Heart right ventricle (tissue), 16 donors: ENCODE measurements at regions of chr21 and their contacts with region 1.

Region 1: DNA sequence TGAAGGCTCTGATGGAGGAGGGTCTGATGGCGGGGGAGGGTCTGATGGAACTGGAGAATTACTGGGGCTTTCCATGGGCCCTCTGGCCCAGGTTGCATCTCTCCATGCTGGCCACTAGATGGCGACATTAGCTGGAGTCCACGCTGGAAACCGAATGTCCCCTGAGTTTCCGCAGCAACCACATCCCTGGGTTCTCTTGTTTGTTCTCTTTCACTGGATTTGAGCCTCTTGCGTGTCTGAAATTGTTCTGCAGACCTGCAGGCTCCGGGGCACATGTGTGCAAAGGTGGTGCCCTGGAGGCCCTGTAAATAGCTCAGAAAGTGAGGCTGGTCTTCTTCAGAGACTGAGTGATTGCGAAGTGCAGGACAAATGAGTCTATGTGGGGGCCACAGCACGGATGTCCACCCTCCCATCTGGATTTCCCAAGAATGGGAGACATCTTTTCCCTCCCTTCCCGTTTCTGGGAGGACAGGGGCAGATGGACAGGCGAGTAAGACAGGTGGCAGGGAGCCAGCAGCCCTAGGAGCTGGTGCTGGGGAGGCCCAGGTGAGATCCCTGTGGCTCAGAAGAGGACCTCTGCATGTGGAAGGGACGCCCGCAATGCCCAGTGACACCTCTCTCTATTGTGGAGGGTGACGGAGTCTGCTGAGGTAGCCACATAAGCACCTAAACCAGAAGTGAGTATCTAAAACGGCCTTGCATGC is 73.2 kb upstream of the ABCG1 start:
- DNase-seq: peak in 1 of 2 donors; percentile 57
- ATAC-seq: peak; percentile 61 to 81 (median 74)
- H3K4me3 ChIP-seq: no peak overlapping the region
- H3K27ac ChIP-seq: no peak overlapping the region
- H3K4me1 ChIP-seq: peaks cover 0 to under 1% (median 0%) of the 10 kb centered on the region in 9 donors
- H3K27me3 ChIP-seq: peaks cover 0 to 8% (median 0%) of the 10 kb centered on the region in 7 donors
- CTCF ChIP-seq: peak; percentile 86 to 96 (median 93)

Region 2: GRCh38 chr21:42079939-42080787 is 65.6 kb before region 1 on chr21:
- intact Hi-C with region 1: no loop called
- DNase-seq: no peak
- ATAC-seq: peak in 2 of 8 donors; percentile 15 to 16
- H3K4me3 ChIP-seq: no peak overlapping the region
- H3K27ac ChIP-seq: no peak overlapping the region
- H3K4me1 ChIP-seq: peaks cover 0 to 20% (median 0%) of the 10 kb centered on the region in 9 donors
- H3K27me3 ChIP-seq: peaks cover 0 to 28% (median 0%) of the 10 kb centered on the region in 7 donors
- CTCF ChIP-seq: no peak

Region 3: GRCh38 chr21:42179316-42179715 is 33.6 kb after region 1 on chr21:
- intact Hi-C with region 1: no loop called
- DNase-seq: no peak
- ATAC-seq: no peak
- H3K4me3 ChIP-seq: no peak overlapping the region
- H3K27ac ChIP-seq: no peak overlapping the region
- H3K4me1 ChIP-seq: peaks cover 0 to 10% (median 0%) of the 10 kb centered on the region in 9 donors
- H3K27me3 ChIP-seq: no peaks in the 10 kb centered on the region
- CTCF ChIP-seq: no peak

Region 4: DNA sequence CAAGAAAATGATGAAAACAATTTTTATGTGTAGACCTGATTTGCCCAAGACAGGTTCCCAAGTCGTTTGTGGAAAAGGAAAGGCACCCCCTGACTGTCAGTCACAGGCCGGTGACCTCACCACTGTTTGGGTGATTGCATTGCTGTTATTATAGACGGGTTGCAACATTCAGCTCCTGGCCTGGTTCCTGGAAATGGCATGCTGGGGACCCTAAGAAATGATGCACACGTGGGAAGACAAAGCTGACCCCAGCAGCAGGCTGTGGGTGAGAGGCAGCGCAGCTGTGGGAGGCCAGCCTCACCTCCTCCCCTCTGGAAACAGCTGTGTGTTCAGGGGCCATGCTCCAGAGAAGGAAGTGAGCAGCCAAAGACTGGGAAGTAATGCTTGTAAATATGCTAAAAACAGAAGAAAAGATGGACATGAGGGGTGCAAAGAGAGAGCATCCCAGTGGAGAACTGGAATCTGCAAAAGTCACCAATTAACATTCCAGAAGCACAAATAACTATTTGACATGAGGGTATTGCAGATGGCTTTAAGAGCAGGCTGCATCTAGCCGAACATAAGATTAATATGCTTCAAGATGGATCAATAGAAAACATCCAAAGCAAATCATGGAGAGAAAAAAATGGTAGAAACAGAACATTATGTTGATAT is 49.8 kb after region 1 on chr21:
- intact Hi-C with region 1: no loop called
- DNase-seq: no peak
- ATAC-seq: peak in 4 of 8 donors; percentile 31 to 44 (median 34)
- H3K4me3 ChIP-seq: no peak overlapping the region
- H3K27ac ChIP-seq: peak overlapping the region in 1 of 10 donors; percentile 5
- H3K4me1 ChIP-seq: peaks cover 3 to 46% (median 15%) of the 10 kb centered on the region in 9 donors
- H3K27me3 ChIP-seq: no peaks in the 10 kb centered on the region
- CTCF ChIP-seq: no peak

Region 5: DNA sequence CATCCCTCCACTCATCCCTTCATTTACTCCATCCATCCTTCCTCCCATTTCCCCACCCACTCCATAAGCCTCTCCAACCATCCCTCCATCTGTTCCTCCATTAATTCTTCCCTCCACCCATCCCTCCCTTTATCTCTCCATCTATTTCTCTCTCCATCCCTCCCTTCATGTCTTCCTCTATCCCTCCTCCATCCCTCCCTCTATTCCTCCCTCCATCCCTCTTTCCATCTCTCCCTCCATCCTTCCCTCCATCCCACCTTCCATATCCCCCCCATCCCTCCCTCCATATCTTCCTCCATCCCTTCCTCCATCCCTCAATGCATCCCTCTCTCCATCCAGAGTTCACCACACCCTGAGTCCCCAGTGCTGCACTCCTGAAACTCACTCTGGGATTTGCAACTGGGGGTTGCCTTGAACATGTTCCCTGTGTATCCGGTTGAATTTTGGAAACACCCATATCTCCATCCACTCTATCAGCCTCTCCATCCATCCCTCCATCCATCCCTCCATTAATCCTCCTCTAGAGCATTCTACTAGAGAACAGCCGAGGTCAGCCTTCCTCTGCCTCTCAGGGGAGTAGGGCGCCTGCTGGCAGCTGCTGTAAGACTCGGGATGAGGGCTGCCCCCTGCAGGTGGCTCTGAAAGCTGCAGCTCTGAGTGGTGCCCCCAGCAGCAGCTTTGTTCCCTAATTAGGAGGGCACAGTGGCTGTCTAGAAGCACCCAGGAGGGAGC is 112.6 kb after region 1 on chr21:
- intact Hi-C with region 1: loop called in 5 of 10 experiments (anchors 2 to 5 kb)
- DNase-seq: peak; percentile 65 to 80
- ATAC-seq: peak in 7 of 8 donors; percentile 42 to 71 (median 59)
- H3K4me3 ChIP-seq: no peak overlapping the region
- H3K27ac ChIP-seq: peak overlapping the region in 1 of 10 donors; percentile 29
- H3K4me1 ChIP-seq: peaks cover 13 to 73% (median 46%) of the 10 kb centered on the region in 9 donors
- H3K27me3 ChIP-seq: no peaks in the 10 kb centered on the region
- CTCF ChIP-seq: peak; percentile 61 to 92 (median 78)

Region 6: DNA sequence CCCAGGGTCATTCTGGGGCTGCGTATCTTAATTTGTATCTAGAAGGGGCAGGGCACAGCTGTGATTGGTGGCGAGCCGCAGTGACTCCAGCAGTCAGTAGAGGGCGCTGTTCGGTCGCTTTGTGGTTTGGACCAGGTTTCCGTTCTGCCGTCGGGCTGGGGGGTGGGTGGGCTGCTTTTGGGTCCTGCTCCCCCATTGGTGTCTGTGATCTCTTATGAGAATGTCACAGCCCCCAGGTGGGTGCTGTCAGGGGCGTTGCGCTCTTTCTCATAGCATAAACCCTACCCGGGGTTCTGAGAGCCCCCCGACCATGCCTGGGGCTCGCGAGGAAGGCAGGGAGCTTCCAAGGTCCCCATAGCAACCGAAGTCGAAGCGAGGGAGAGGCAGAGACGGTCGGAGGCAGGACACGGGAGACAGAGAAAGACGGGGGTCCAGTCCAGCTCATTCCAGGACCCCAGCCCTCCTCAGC is 164.1 kb after region 1 on chr21:
- intact Hi-C with region 1: loop called in 1 of 10 experiments (anchors 10 kb)
- DNase-seq: peak; percentile 37 to 50
- ATAC-seq: peak in 7 of 8 donors; percentile 36 to 66 (median 48)
- H3K4me3 ChIP-seq: no peak overlapping the region
- H3K27ac ChIP-seq: no peak overlapping the region
- H3K4me1 ChIP-seq: peaks cover 0 to 31% (median 24%) of the 10 kb centered on the region in 9 donors
- H3K27me3 ChIP-seq: peaks cover 0 to 53% (median 15%) of the 10 kb centered on the region in 7 donors
- CTCF ChIP-seq: peak; percentile 54 to 78 (median 75)

Region 7: DNA sequence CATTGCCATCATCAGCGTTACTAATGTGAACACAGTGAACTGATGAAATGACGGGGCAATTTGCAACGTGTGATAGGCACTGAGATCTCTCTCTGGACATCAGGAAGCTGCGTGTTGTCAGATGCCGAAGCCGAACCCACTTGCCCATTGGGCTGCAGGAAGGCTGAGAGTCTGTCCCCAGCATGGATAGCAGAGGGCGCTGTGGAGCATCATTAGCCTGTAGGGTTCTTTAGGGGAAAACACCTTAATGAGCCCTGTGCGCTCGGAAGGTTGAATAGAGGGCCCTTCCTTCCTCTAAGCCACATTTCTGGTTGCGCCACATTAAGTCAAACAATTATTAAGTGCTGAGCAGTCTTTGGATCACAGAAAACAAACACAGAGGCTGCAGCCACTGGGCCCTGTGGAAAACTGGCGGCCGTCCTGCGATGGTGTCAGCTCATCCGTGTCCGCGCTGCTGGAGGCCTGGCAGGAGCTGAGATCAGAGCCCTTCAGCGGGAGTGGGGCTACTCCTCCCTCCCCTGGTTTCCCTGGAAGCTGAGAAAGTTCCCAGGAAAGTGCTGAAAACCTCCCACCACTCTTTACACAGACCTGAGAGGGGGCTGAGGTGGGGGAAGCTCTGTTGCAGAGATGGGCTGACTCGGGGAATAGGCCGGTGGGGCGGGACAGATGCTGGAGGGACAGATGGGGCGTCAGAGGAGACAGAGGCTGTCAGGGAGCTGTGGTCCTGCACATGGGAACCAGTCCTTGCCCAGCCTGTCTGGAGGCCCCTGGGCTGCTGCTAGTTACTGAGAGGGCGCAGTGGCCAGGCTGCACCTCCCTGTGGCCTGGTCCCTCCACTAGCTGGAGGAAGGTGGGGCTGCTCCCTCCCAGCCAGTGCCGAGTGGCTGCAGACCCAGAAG is 192.4 kb after region 1 on chr21:
- intact Hi-C with region 1: loop called in 1 of 10 experiments (anchors 10 kb)
- DNase-seq: peak; percentile 50 to 53
- ATAC-seq: peak; percentile 33 to 86 (median 76)
- H3K4me3 ChIP-seq: no peak overlapping the region
- H3K27ac ChIP-seq: no peak overlapping the region
- H3K4me1 ChIP-seq: peaks cover 0 to 7% (median 0%) of the 10 kb centered on the region in 9 donors
- H3K27me3 ChIP-seq: peaks cover 0 to 42% (median 23%) of the 10 kb centered on the region in 7 donors
- CTCF ChIP-seq: peak; percentile 18 to 73 (median 60)

Region 8: GRCh38 chr21:42449296-42449927 is 303.7 kb after region 1 on chr21:
- intact Hi-C with region 1: loop called (anchors 1 to 5 kb)
- DNase-seq: no peak
- ATAC-seq: no peak
- H3K4me3 ChIP-seq: no peak overlapping the region
- H3K27ac ChIP-seq: peak overlapping the region in 1 of 10 donors; percentile 37
- H3K4me1 ChIP-seq: peaks cover 0 to 7% (median 4%) of the 10 kb centered on the region in 9 donors
- H3K27me3 ChIP-seq: peaks cover 0 to 20% (median 7%) of the 10 kb centered on the region in 7 donors
- CTCF ChIP-seq: no peak

Region 9: DNA sequence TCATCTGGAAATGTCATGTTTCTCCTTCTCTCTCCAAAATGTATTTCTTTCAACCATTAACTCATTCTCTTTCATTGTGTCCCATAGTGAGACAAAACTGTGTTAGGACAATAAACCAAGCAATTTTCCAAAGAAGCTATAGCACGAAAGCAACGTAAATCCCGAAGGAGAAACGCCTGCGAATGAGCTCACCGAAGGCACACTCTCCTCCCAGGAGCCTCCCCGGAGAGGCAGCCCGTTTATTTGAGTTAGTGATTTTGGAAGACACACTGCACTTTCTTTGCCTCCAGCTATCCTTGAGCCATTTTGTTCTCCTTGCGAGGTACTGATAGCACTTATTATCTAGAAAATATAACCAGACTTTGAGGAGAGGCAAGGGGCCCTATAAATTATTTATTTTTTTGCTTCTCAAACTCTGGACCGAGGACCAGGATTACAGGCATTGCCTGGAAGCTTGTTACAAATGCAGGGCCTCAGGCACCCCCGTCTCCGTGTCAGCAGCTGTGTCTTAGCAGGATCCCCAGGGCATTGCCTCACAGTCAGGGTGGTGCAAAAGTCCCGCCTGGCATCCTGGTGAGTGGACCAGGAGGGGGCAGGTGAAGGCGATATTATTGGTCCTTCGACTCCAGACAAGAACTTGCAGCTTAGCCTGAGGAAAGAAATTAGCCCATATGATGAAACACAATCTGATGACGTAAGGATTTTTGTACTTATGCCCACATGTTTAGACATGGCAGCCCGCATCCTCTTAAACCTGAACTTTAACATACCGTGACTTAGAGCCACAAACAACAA is 309.3 kb after region 1 on chr21:
- intact Hi-C with region 1: loop called in 3 of 10 experiments (anchors 1 to 2 kb)
- DNase-seq: no peak
- ATAC-seq: no peak
- H3K4me3 ChIP-seq: no peak overlapping the region
- H3K27ac ChIP-seq: no peak overlapping the region
- H3K4me1 ChIP-seq: peaks cover 0 to 7% (median 0%) of the 10 kb centered on the region in 9 donors
- H3K27me3 ChIP-seq: peaks cover 0 to 16% (median 3%) of the 10 kb centered on the region in 7 donors
- CTCF ChIP-seq: no peak